Activated T-helper 2 cell treated with anti-CD3 and anti-CD28 coated beads, Interferon-gamma antibody, Interleukin-2, Interleukin-4, amounts not matched to agents 10 μg/mL and 5 μg/mL and 100 μg/mL, durations not matched to agents 14 hours and 24 hours and 36 hours (primary cell): ENCODE measurements at regions of chr16 and their contacts with region 1.

Region 1: GRCh38 chr16:88785106-88785924 is at the start of gene PIEZO1:
- DNase-seq: peak; percentile 71
- H3K4me3 Mint-ChIP-seq: peak within 1 kb of the TSS; percentile 86
- H3K27ac Mint-ChIP-seq: peak within 1 kb of the TSS; percentile 80
- H3K4me1 Mint-ChIP-seq: peaks cover 40% of the 10 kb centered on the region
- H3K27me3 Mint-ChIP-seq: no peaks in the 10 kb centered on the region
- total RNA-seq, gene PIEZO1: 240 and 255 TPM in 2 replicates

Region 2: DNA sequence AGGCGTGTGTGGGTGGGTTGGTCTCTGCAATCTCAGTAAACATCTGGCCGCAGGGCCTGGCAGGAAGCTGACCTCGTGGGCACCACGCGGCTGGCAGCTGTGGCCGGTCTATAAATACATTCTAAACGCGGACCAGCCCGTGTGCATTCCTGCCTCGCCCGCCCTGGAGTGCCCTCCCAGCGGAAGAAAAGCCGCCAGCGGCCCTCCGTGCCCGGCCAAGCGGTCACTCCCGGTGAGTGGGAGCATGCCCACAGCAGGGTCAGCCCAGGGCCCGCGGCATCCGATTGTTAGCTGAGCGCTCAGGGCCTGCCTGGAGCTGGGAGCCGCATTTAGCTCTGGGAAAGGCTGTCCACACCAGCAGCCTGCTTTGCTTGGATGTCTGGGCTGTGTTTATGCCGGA is 392.3 kb before region 1 on chr16:
- intact Hi-C with region 1: no loop called
- DNase-seq: no peak
- H3K4me3 Mint-ChIP-seq: no peak overlapping the region
- H3K27ac Mint-ChIP-seq: no peak overlapping the region
- H3K4me1 Mint-ChIP-seq: no peaks in the 10 kb centered on the region
- H3K27me3 Mint-ChIP-seq: no peaks in the 10 kb centered on the region

Region 3: DNA sequence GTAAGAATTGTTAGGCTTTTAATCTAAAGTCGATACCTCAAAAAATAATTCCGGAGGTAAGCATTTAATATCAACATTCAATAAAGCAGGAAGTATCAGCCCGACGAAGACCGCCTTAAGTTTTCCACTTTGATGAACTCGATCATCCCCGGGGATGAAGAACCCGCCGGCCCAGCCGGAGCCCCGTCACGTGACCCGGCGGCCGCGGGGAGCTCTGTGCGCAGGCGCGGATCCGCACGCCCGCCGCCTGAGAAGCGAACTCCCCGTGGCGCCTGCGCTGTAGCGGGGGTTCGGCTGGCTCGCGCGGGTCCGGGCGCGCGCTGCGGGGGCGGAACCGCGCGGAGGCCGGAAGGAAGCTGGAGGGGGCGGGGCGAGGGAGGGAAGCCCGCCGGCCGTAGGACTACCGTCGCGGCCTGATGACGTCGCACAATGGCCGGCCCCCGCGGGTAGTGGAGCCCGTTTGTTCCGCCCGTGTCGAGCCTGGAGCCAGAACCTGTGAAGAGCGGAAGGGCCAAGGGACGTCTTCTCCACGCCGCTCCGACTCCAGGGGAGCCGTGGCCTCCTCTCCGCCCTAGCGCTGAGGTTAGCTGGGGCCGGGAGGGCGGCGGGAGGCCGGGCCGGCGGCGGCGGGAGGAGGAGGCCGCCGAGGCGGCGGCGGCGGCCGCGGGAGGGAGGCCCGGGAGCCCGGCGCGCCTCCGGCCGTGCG is 215.2 kb before region 1 on chr16 and contains the start of gene ZC3H18:
- intact Hi-C with region 1: loop called (anchors 10 kb)
- DNase-seq: peak; percentile 94
- H3K4me3 Mint-ChIP-seq: peak within 1 kb of the TSS; percentile 89
- H3K27ac Mint-ChIP-seq: peak within 1 kb of the TSS; percentile 87
- H3K4me1 Mint-ChIP-seq: peaks cover 27% of the 10 kb centered on the region
- H3K27me3 Mint-ChIP-seq: no peaks in the 10 kb centered on the region
- total RNA-seq, gene ZC3H18: 93.9 and 101 TPM in 2 replicates

Region 4: GRCh38 chr16:88737298-88738150 is 47.8 kb before region 1 on chr16:
- intact Hi-C with region 1: loop called (anchors 2 kb)
- DNase-seq: peak; percentile 54
- H3K4me3 Mint-ChIP-seq: no peak overlapping the region
- H3K27ac Mint-ChIP-seq: no peak overlapping the region
- H3K4me1 Mint-ChIP-seq: no peaks in the 10 kb centered on the region
- H3K27me3 Mint-ChIP-seq: no peaks in the 10 kb centered on the region

Region 5: DNA sequence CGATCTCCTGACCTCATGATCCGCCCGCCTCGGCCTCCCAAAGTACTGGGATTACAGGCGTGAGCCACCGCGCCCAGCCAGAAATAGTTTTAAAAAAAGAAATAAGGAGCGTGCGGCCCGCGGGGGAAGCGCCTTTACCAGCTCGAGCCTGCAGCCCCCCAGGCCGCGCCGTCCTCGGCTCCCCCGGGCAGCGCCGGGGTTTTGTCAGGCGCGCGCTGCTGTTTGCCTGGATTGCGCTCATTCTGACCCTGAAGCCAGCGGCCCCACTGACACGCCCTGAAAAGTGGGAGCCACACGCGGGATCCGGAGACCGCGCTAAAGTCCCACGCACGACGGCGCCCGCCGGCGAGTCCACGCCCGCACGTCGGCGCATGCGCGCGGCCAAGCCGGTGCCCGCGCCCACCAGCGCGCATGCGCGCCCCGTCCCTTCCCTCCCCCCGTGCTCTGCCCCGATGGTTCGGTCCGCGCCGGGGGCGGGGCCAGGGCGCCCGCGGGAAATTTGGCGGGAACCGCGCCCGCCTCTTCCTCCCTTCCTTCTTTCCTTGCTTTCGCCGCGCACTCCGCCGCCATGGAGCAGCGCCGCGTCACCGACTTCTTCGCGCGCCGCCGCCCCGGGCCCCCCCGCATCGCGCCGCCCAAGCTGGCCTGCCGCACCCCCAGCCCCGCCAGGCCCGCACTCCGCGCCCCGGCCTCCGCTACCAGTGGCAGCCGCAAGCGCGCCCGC is 18.1 kb after region 1 on chr16 and contains the start of gene CDT1:
- intact Hi-C with region 1: loop called (anchors 1 kb)
- DNase-seq: peak; percentile 83
- H3K4me3 Mint-ChIP-seq: peak within 1 kb of the TSS; percentile 85
- H3K27ac Mint-ChIP-seq: peak within 1 kb of the TSS; percentile 84
- H3K4me1 Mint-ChIP-seq: peaks cover 18% of the 10 kb centered on the region
- H3K27me3 Mint-ChIP-seq: no peaks in the 10 kb centered on the region
- total RNA-seq, gene CDT1: 79.9 and 90.9 TPM in 2 replicates